PC-9 (cell line): ENCODE measurements at regions of chr13 and their contacts with region 1.

Region 1: GRCh38 chr13:67204764-67205163 is 25.4 kb downstream of the PCDH9 start:
- DNase-seq: no peak
- H3K4me3 ChIP-seq: no peak overlapping the region
- H3K27ac ChIP-seq: no peak overlapping the region
- H3K4me1 ChIP-seq: no peaks in the 10 kb centered on the region
- H3K27me3 ChIP-seq: no peaks in the 10 kb centered on the region
- CTCF ChIP-seq: no peak

Region 2: DNA sequence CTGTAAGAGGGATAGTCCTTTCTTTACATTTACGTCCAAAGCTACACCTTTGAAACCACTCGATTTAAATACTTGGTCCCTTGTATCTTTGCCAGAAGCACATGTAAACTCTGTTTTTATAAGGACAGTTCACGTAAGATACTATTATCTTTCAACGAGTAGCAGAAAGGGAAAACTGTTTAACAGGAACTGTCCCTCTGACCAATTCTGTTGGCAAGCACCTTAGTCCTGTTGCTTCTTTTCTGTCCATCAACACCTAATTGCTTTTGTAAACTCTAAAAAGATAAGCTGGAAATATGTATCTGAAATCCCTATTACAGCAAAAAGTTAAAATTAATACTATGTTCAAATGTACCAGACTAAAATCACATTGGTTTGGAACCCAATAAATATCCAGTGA is 12.0 kb before region 1 on chr13:
- CTCF ChIA-PET with region 1: no interaction called
- POLR2A ChIA-PET with region 1: no interaction called
- intact Hi-C with region 1: loop called (anchors 2 kb)
- DNase-seq: no peak
- H3K4me3 ChIP-seq: no peak overlapping the region
- H3K27ac ChIP-seq: no peak overlapping the region
- H3K4me1 ChIP-seq: no peaks in the 10 kb centered on the region
- H3K27me3 ChIP-seq: no peaks in the 10 kb centered on the region
- CTCF ChIP-seq: no peak